ENCODE measurements at regions of chr15 and their contacts with region 1.

Region 1: GRCh38 chr15:74307827-74308644 is 59.4 kb downstream of the CYP11A1 start:
- DNase-seq: peak in 8 of 10 donors; percentile 44 to 64 (median 59)
- H3K4me3 ChIP-seq: no peak overlapping the region
- H3K27ac ChIP-seq: no peak overlapping the region
- H3K27me3 ChIP-seq: peaks cover 0 to 28% (median 0%) of the 10 kb centered on the region in 45 donors
- CTCF ChIP-seq: peak; percentile 12 to 82 (median 64)

Region 2: GRCh38 chr15:74053941-74054529 is 254.0 kb before region 1 on chr15:
- intact Hi-C with region 1: loop called (anchors 5 to 10 kb)
- DNase-seq: peak in 8 of 10 donors; percentile 39 to 68 (median 50)
- H3K4me3 ChIP-seq: peak overlapping the region in 38 of 59 donors; percentile 6 to 58 (median 34)
- H3K27ac ChIP-seq: peak overlapping the region in 1 of 59 donors; percentile 28
- H3K27me3 ChIP-seq: no peaks in the 10 kb centered on the region
- CTCF ChIP-seq: peak in 54 of 56 donors; percentile 36 to 73 (median 60)

Region 3: GRCh38 chr15:74127260-74127953 is 180.6 kb before region 1 on chr15:
- intact Hi-C with region 1: loop called (anchors 2 kb)
- DNase-seq: peak; percentile 79 to 94 (median 88)
- H3K4me3 ChIP-seq: peak overlapping the region in 58 of 59 donors; percentile 11 to 62 (median 42)
- H3K27ac ChIP-seq: peak overlapping the region in 6 of 59 donors; percentile 8 to 72 (median 62)
- H3K27me3 ChIP-seq: peaks cover 0 to 62% (median 43%) of the 10 kb centered on the region in 45 donors
- CTCF ChIP-seq: peak; percentile 86 to 100 (median 99)